PC-9 (cell line): ENCODE measurements at regions of chr1 and their contacts with region 1.

Region 1: DNA sequence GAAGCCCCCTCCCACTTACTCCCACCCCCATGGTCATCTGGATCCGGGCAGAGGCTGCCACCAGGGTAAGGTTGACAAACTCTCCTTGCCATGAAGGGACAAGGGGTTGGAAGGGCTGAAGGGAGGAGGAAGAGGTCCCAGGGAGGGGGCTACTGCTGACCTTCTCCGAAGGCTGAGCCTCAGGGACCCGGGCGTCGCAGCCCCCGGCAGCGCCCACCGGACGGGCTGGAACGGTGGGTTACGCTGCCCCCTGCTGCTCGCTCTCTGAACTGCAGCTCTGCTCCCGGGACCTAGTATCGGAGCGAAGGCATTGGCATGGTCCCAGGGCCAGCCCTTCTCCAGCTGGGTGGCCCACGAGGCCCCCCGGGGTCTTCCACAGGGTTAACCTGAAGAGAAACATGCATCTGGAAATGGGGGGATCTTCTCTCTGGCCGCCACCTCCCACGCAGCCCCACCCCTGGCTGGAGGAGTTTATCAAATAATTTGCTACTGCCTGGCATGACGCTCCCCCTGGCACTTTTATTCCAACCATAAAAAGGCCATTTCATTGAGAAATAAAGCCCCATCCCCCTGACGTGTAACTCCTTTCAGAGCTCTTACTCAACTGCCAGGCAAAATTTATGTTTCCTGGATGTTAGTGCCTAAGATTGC is 70.4 kb upstream of the TARDBP start:
- DNase-seq: peak in 1 of 2 experiments; percentile 43
- H3K4me3 ChIP-seq: no peak overlapping the region
- H3K27ac ChIP-seq: no peak overlapping the region
- H3K4me1 ChIP-seq: no peaks in the 10 kb centered on the region
- H3K27me3 ChIP-seq: no peaks in the 10 kb centered on the region
- CTCF ChIP-seq: peak; percentile 93

Region 2: GRCh38 chr1:10704368-10704911 is 237.6 kb before region 1 on chr1:
- CTCF ChIA-PET with region 1: no interaction called
- POLR2A ChIA-PET with region 1: interaction called, 10 read pairs
- intact Hi-C with region 1: no loop called
- DNase-seq: no peak
- H3K4me3 ChIP-seq: no peak overlapping the region
- H3K27ac ChIP-seq: no peak overlapping the region
- H3K4me1 ChIP-seq: peaks cover 11% of the 10 kb centered on the region
- H3K27me3 ChIP-seq: no peaks in the 10 kb centered on the region
- CTCF ChIP-seq: no peak

Region 3: GRCh38 chr1:10895621-10896020 is 46.4 kb before region 1 on chr1:
- CTCF ChIA-PET with region 1: interaction called, 11 read pairs
- POLR2A ChIA-PET with region 1: no interaction called
- intact Hi-C with region 1: no loop called
- DNase-seq: no peak
- H3K4me3 ChIP-seq: no peak overlapping the region
- H3K27ac ChIP-seq: peak overlapping the region; percentile 100; the same call in 1 of the 2 replicates
- H3K4me1 ChIP-seq: peaks cover 66% of the 10 kb centered on the region
- H3K27me3 ChIP-seq: no peaks in the 10 kb centered on the region
- CTCF ChIP-seq: no peak

Region 4: GRCh38 chr1:10917513-10918454 is 24.2 kb before region 1 on chr1:
- CTCF ChIA-PET with region 1: interaction called, 13 read pairs
- POLR2A ChIA-PET with region 1: no interaction called
- intact Hi-C with region 1: no loop called
- DNase-seq: no peak
- H3K4me3 ChIP-seq: no peak overlapping the region
- H3K27ac ChIP-seq: no peak overlapping the region
- H3K4me1 ChIP-seq: no peaks in the 10 kb centered on the region
- H3K27me3 ChIP-seq: no peaks in the 10 kb centered on the region
- CTCF ChIP-seq: no peak

Region 5: DNA sequence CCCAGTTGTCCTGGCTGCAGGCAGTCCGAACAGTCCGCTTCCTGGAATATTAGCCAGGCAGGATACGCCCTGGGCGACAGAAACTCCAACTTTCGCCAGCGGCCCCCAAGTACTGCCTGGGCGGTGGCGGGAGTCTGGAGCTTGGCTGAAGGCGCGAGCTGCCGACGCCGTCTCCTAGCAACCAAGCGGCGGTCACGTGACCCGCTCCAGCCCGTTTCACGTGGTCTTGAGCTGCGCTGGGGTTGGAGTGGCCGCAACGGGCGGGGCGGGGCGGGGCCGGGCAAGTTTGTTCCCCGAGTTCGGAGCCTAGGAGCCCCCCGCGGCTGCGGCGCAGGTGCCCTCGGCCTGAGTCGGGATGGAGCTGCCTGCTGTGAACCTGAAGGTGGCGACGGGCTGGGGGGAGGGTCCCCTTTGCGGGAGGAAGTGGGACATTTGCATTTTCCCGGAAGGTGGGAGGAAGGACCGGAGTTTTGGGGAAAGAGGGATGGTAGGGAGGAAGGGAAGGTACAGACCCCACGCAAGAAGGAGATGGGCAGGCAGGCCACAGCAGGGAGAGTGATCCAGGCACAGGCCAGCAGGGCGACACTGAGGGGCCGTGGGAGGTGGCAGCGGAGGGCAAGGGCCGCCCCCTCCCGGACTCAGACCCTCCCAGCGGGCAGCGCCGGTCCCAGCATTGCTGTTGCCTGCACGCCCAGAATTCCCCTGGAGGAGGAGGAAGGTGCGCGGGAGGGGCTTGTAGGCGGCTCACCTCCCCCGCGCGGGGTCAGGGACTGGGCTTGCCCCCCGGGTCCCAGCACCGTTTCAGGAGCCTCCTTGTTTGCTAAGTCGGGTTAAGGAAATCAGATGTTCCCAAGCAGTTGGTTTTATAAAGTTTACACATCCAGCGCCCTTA is 794.1 kb after region 1 on chr1 and contains the start of gene AGTRAP:
- CTCF ChIA-PET with region 1: no interaction called
- POLR2A ChIA-PET with region 1: no interaction called
- intact Hi-C with region 1: no loop called
- DNase-seq: peak; percentile 78 to 91
- H3K4me3 ChIP-seq: peak within 1 kb of the TSS; percentile 79
- H3K27ac ChIP-seq: peak within 1 kb of the TSS; percentile 96
- H3K4me1 ChIP-seq: peaks cover 9% of the 10 kb centered on the region
- H3K27me3 ChIP-seq: no peaks in the 10 kb centered on the region
- CTCF ChIP-seq: no peak
- total RNA-seq, gene AGTRAP: 75.5 and 77.7 TPM in 2 replicates